ENCODE measurements at regions of chr20 and their contacts with region 1.

Region 1: GRCh38 chr20:38645980-38646858 is 44.6 kb downstream of the ARHGAP40 start:
- DNase-seq: peak; percentile 76
- H3K4me3 ChIP-seq: no peak overlapping the region
- H3K27ac ChIP-seq: no peak overlapping the region
- H3K4me1 ChIP-seq: no peaks in the 10 kb centered on the region
- H3K27me3 ChIP-seq: peaks cover 8% of the 10 kb centered on the region
- CTCF ChIP-seq: peak; percentile 95

Region 2: DNA sequence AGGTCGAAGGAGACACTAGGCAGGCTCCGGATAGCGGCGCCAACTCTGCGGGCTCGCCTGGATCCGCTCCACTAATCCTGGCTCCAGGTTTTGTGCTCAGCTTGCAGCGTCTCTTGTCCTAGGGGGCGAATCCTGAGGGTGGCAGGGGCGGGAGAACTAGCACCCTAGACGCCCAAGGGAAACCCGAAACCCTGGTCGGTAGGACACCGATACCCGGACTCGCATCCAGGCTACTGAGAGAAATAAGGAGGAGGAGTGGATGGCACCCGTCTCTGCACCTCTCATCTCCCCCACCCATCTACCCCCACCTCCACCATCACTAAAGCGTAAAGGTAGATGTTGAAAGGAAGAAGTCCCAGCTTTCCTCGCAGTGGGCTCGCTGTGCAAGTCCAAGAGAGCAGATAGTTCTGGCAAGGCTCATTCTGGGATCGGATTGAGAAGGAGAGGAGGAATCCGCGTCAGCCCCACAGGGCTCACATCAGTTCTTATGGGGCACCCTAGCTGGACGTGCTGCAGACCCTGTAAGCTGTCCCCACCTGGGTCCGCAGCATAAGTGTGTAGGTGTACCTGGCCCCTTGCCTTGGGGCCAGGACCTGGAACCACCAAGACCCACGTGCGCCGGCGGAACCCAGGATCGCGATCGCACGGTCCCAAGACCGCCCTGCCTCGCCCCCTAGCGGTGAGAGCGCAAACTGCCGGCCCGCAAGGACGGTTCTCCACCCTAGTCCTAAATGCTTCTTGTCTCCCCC is 84.9 kb after region 1 on chr20:
- intact Hi-C with region 1: loop called (anchors 5 kb)
- DNase-seq: peak; percentile 66
- H3K4me3 ChIP-seq: peak overlapping the region; percentile 19
- H3K27ac ChIP-seq: no peak overlapping the region
- H3K4me1 ChIP-seq: no peaks in the 10 kb centered on the region
- H3K27me3 ChIP-seq: peaks cover 75% of the 10 kb centered on the region
- CTCF ChIP-seq: peak; percentile 99

Region 3: GRCh38 chr20:38751360-38751976 is 105.2 kb after region 1 on chr20:
- intact Hi-C with region 1: loop called (anchors 5 kb)
- DNase-seq: no peak
- H3K4me3 ChIP-seq: no peak overlapping the region
- H3K27ac ChIP-seq: no peak overlapping the region
- H3K4me1 ChIP-seq: peaks cover 7% of the 10 kb centered on the region
- H3K27me3 ChIP-seq: no peaks in the 10 kb centered on the region
- CTCF ChIP-seq: peak; percentile 49

Region 4: DNA sequence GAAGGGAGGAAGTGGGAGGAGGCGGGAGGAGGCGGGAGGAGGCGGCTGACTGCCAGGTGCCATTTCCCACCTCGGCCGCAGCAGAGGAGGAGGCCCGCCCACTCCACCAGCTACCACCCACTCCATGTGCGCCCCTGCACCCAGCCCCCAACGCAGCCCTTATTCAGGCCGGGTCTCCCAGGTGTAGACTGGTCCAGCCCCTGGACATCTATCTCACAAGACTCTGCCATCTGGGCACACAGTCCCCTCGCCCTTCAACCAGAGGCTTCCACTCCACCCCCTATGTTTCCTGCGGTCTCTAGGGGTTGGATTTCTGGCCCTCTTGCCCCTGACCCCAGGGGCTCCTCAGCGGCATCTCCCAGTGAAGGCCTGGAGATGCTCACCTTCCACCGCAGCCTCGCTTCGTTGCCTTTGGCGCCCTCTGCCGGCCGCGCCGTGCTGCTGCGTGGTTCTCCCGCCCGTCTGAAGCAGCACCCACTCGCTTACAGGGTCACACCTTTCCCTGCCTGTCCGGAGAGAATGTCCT is 247.4 kb after region 1 on chr20:
- intact Hi-C with region 1: loop called (anchors 10 kb)
- DNase-seq: peak; percentile 68
- H3K4me3 ChIP-seq: peak overlapping the region; percentile 7
- H3K27ac ChIP-seq: no peak overlapping the region
- H3K4me1 ChIP-seq: no peaks in the 10 kb centered on the region
- H3K27me3 ChIP-seq: no peaks in the 10 kb centered on the region
- CTCF ChIP-seq: peak; percentile 90